CD8-positive, alpha-beta T cell (primary cell): ENCODE measurements at regions of chr6 and their contacts with region 1.

Region 1: DNA sequence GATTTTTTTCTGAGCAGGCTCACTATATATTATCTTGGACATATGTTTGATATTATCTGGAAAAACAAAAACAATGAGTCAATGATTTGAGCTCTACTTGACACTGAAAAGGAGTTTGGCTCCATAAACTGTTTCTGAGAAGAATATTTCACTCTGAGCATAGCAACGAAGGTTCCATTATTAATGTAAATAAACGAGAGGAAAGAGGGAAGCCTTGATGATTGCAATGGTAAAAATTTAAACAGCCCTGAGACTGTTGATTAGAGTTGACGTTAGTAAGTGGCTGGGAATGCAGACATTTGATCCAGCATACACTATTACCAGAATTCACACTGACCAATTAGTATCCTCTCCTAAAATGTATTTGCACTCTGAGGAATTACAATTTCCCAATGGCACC is 1090.0 kb downstream of the EPHA7 start:
- DNase-seq: no peak
- ATAC-seq: no peak
- H3K4me3 ChIP-seq: no peak overlapping the region
- H3K4me3 Mint-ChIP-seq: no peak overlapping the region
- H3K27ac ChIP-seq: no peak overlapping the region
- H3K27ac Mint-ChIP-seq: no peak overlapping the region
- H3K4me1 ChIP-seq: no peaks in the 10 kb centered on the region
- H3K4me1 Mint-ChIP-seq: no peaks in the 10 kb centered on the region
- H3K27me3 ChIP-seq: no peaks in the 10 kb centered on the region
- H3K27me3 Mint-ChIP-seq: no peaks in the 10 kb centered on the region
- CTCF ChIP-seq: no peak

Region 2: GRCh38 chr6:92289831-92290230 is 39.6 kb before region 1 on chr6:
- CTCF ChIA-PET with region 1: no interaction called
- POLR2A ChIA-PET with region 1: no interaction called
- intact Hi-C with region 1: no loop called
- DNase-seq: no peak
- ATAC-seq: no peak
- H3K4me3 ChIP-seq: no peak overlapping the region
- H3K4me3 Mint-ChIP-seq: no peak overlapping the region
- H3K27ac ChIP-seq: no peak overlapping the region
- H3K27ac Mint-ChIP-seq: no peak overlapping the region
- H3K4me1 ChIP-seq: no peaks in the 10 kb centered on the region
- H3K4me1 Mint-ChIP-seq: no peaks in the 10 kb centered on the region
- H3K27me3 ChIP-seq: no peaks in the 10 kb centered on the region
- H3K27me3 Mint-ChIP-seq: no peaks in the 10 kb centered on the region
- CTCF ChIP-seq: no peak

Region 3: DNA sequence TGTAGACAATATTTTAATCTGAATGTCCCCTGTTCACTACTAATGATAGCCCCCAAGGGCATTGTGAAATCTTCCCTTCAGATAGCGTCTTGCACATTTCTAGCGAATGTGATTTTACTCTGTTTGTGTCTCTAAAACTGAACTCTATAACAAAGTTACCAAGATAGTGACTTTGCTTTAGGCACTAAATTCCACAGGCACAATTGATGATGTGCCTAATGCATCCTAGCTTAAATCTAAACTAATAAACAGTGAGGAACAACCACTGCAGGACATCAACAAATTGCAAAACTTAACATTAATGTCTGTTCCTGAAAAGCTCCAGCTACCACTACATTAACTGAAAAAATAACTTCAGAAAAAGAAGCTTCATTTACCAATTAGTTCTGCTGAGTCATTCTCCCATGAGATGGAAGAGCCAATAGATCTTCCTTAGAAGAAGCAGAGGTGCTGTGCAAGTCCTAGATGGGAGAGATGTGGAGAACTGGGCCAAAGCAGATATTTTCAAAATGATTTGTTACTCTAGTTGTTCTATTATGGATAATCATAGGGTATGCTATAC is 24.9 kb after region 1 on chr6:
- CTCF ChIA-PET with region 1: no interaction called
- POLR2A ChIA-PET with region 1: no interaction called
- intact Hi-C with region 1: loop called in 1 of 2 experiments (anchors 1 kb)
- DNase-seq: no peak
- ATAC-seq: no peak
- H3K4me3 ChIP-seq: no peak overlapping the region
- H3K4me3 Mint-ChIP-seq: no peak overlapping the region
- H3K27ac ChIP-seq: no peak overlapping the region
- H3K27ac Mint-ChIP-seq: no peak overlapping the region
- H3K4me1 ChIP-seq: no peaks in the 10 kb centered on the region
- H3K4me1 Mint-ChIP-seq: no peaks in the 10 kb centered on the region
- H3K27me3 ChIP-seq: no peaks in the 10 kb centered on the region
- H3K27me3 Mint-ChIP-seq: no peaks in the 10 kb centered on the region
- CTCF ChIP-seq: no peak